Left ventricle myocardium superior (tissue), 1 donor: ENCODE measurements at regions of chr2 and their contacts with region 1.

Region 1: DNA sequence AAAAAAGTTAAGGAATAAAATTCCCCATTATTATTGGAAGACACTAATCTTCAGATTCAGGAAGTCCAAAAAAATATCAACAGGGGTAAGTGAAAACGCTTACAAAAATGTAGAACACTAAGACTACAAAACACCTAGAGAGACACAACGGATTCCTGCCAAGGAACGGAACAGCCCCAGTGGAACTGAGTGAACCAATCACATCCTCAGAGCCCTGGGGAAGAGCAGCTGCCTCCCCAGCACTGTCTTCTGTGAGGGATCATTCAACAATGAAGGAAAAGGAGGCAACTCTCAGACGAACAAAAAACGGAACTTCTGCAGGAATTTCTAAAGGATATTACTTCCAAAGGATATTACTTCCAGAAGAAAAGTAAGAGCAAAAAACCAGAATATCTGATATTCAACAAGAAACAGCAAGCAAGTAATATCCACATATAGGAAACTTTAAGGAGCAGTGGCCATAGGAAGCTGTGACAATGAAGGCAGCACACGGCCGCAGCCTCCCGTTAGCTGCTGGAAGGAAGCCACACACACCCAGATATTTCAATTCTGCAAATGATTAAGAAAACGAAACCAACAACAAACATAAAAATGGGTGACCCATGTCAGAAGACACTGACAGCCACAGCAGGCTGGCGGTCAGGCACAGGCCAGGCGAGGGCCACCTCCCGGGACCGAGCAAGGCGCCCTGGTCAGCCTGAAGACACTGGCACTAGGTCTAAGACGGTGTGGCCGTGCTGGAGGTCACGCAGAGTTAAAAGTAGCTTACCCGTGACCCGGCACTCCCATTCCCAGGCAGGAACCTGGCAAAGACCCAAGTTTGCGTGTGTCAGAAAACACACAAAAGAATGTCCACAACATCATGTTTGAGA is 81.8 kb downstream of the HDAC4 start:
- DNase-seq: peak; percentile 26
- ATAC-seq: peak; percentile 37

Region 2: DNA sequence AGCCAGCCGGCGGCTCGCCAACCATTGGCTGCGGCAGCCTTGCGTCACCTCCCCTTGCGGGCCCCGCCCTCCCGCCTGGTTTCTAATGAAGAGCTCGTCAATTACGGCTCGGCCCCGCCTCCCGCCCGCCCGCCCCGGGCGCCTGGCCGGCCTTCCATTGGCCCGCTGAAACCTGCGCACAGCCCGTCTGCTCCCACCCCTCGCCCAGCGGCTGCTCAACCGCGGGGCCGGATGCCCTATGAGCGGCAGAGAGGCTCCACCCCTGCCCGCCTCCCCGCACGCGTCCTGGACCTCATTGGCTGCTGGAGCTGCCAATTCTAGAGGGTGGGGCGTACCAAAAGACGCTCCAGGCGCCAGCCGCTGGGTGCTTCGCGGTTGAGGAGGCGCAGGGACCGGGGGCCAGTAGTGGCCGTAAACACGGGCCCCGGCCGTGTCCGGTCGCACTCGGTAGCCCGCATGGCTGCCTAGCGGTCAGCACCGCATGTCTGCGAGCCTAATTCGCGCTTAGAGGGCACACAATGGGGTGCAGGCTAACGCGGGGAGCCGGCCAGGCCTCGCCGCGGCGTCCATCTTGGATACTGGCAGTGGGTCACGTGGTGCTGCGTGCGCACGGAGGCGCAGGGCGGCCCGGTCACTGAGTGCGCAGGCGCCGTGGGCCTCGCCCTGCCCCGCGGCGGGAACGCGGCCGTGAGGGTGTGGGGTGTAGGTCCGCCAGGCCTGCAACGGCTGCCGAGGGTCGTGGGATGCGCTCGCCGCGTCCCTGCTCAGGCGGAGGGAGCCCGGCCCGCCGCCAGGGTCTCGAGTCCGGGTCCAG is 82.2 kb after region 1 on chr2:
- intact Hi-C with region 1: loop called (anchors 5 kb)
- DNase-seq: peak; percentile 100
- ATAC-seq: peak; percentile 95